ENCODE measurements at regions of chr3 and their contacts with region 1.

Region 1: GRCh38 chr3:150414258-150414657 is 6.2 kb downstream of the TSC22D2 start:
- DNase-seq: peak; percentile 34
- H3K4me3 Mint-ChIP-seq: peak overlapping the region; percentile 74
- H3K27ac Mint-ChIP-seq: peak overlapping the region; percentile 18
- H3K4me1 Mint-ChIP-seq: peaks cover 53% of the 10 kb centered on the region
- H3K27me3 Mint-ChIP-seq: no peaks in the 10 kb centered on the region
- CTCF ChIP-seq: no peak

Region 2: DNA sequence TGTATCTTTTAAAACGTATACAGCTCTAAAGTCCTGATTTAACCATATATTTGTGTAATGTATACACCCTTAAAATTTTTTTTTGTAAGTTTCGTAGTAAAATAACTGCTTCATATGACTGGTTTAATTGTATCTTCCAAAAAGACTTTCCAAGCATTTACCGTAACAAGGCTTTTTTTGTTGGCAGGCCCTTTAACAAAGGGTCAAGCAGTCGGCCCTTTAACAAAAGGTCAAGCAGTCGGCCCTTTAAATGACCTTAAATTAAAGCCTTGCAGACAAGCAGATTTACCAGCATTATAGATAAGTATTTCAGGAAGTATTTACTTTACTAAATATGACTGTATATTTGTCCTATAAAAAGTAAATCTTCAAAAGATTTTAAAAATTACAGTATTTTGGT is 21.9 kb after region 1 on chr3:
- CTCF ChIA-PET with region 1: interaction called, 3 read pairs
- intact Hi-C with region 1: loop called (anchors 2 kb)
- DNase-seq: no peak
- H3K4me3 Mint-ChIP-seq: no peak overlapping the region
- H3K27ac Mint-ChIP-seq: no peak overlapping the region
- H3K4me1 Mint-ChIP-seq: peaks cover 11% of the 10 kb centered on the region
- H3K27me3 Mint-ChIP-seq: no peaks in the 10 kb centered on the region
- CTCF ChIP-seq: no peak

Measured in Calu3 (cell line).